Natural killer cell (primary cell): ENCODE measurements at regions of chr3 and their contacts with region 1.

Region 1: GRCh38 chr3:108124337-108125152 is 33.7 kb upstream of the CD47 start:
- DNase-seq: peak; percentile 32 to 89
- ATAC-seq: peak; percentile 63 to 78 (median 63)
- H3K4me3 ChIP-seq: peak overlapping the region; percentile 42
- H3K4me3 Mint-ChIP-seq: peak overlapping the region; percentile 79
- H3K27ac ChIP-seq: peak overlapping the region; percentile 97
- H3K27ac Mint-ChIP-seq: peak overlapping the region; percentile 93 to 97
- H3K4me1 ChIP-seq: peaks cover 60% of the 10 kb centered on the region
- H3K4me1 Mint-ChIP-seq: peaks cover 61 to 63% of the 10 kb centered on the region in 2 donors
- H3K27me3 ChIP-seq: no peaks in the 10 kb centered on the region
- H3K27me3 Mint-ChIP-seq: no peaks in the 10 kb centered on the region
- CTCF ChIP-seq: no peak

Region 2: GRCh38 chr3:108073764-108074431 is 50.6 kb before region 1 on chr3:
- intact Hi-C with region 1: loop called (anchors 10 kb)
- DNase-seq: no peak
- ATAC-seq: no peak
- H3K4me3 ChIP-seq: no peak overlapping the region
- H3K4me3 Mint-ChIP-seq: no peak overlapping the region
- H3K27ac ChIP-seq: no peak overlapping the region
- H3K27ac Mint-ChIP-seq: peak overlapping the region; percentile 76 to 79
- H3K4me1 ChIP-seq: peaks cover 7% of the 10 kb centered on the region
- H3K4me1 Mint-ChIP-seq: peaks cover 88 to 92% of the 10 kb centered on the region in 2 donors
- H3K27me3 ChIP-seq: no peaks in the 10 kb centered on the region
- H3K27me3 Mint-ChIP-seq: no peaks in the 10 kb centered on the region
- CTCF ChIP-seq: no peak

Region 3: GRCh38 chr3:108100906-108101660 is 23.5 kb before region 1 on chr3:
- intact Hi-C with region 1: loop called (anchors 1 kb)
- DNase-seq: peak in 1 of 2 donors; percentile 68
- ATAC-seq: peak; percentile 26 to 33 (median 28)
- H3K4me3 ChIP-seq: no peak overlapping the region
- H3K4me3 Mint-ChIP-seq: peak overlapping the region; percentile 75
- H3K27ac ChIP-seq: peak overlapping the region; percentile 69
- H3K27ac Mint-ChIP-seq: peak overlapping the region; percentile 88 to 97
- H3K4me1 ChIP-seq: peaks cover 72% of the 10 kb centered on the region
- H3K4me1 Mint-ChIP-seq: peaks cover 77 to 81% of the 10 kb centered on the region in 2 donors
- H3K27me3 ChIP-seq: no peaks in the 10 kb centered on the region
- H3K27me3 Mint-ChIP-seq: no peaks in the 10 kb centered on the region
- CTCF ChIP-seq: no peak

Region 4: GRCh38 chr3:108150200-108150599 is 25.7 kb after region 1 on chr3:
- intact Hi-C with region 1: no loop called
- DNase-seq: no peak
- ATAC-seq: no peak
- H3K4me3 ChIP-seq: no peak overlapping the region
- H3K4me3 Mint-ChIP-seq: no peak overlapping the region
- H3K27ac ChIP-seq: no peak overlapping the region
- H3K27ac Mint-ChIP-seq: no peak overlapping the region
- H3K4me1 ChIP-seq: no peaks in the 10 kb centered on the region
- H3K4me1 Mint-ChIP-seq: peaks cover 9 to 32% of the 10 kb centered on the region in 2 donors
- H3K27me3 ChIP-seq: no peaks in the 10 kb centered on the region
- H3K27me3 Mint-ChIP-seq: no peaks in the 10 kb centered on the region
- CTCF ChIP-seq: no peak

Region 5: DNA sequence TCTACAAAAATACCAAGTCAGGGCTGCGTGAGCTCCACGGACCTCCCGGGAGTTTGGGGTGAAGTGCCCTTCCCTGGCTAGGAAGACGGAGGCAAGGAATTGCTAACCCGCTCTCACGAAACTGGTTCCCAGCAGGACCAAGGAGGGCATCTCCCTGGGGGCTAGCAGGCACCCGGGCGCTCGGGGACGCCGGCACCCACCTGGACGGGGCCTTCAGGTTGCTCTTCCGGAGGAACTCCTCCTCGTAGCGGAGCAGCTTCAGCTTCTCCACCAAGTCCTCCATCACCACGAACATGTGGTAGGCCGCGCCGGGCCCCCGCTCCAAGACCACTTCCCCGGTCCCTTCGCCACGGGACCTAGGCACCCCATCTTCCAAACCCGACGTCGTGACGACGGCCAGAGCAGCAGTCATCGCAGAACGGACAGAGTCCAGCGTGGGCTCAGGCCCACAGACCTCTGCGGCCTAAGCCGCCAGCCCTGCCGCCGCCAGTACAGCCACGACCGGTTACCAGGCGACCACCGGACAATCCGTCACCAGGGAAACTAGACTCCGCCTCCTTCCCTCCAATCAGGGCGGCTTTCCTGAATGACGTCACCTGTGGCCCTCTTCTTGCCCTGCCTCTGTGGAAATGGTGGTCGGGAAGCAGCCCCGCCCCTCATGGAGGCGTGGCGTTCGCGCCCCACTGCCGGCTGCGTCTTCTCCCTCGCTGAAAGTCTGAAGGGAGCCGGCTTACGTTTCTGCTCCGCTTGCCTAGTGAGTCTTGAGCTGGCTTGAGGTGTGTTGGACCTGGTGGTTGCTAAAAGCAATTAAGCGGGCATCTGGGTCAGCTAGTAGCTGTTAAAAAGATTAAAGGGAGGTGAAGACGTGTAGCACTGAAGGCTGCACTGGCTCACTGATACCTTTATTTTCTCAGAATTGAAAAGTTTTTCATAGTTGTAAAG is 97.6 kb after region 1 on chr3 and contains the start of gene IFT57:
- intact Hi-C with region 1: loop called (anchors 2 kb)
- DNase-seq: peak; percentile 94 to 99
- ATAC-seq: peak; percentile 93 to 98 (median 95)
- H3K4me3 ChIP-seq: peak within 1 kb of the TSS; percentile 86
- H3K4me3 Mint-ChIP-seq: peak within 1 kb of the TSS; percentile 97
- H3K27ac ChIP-seq: peak within 1 kb of the TSS; percentile 91
- H3K27ac Mint-ChIP-seq: peak within 1 kb of the TSS; percentile 99 to 100
- H3K4me1 ChIP-seq: peaks cover 11% of the 10 kb centered on the region
- H3K4me1 Mint-ChIP-seq: peaks cover 39 to 50% of the 10 kb centered on the region in 2 donors
- H3K27me3 ChIP-seq: no peaks in the 10 kb centered on the region
- H3K27me3 Mint-ChIP-seq: no peaks in the 10 kb centered on the region
- CTCF ChIP-seq: no peak
- total RNA-seq, gene IFT57: 22.2 to 49.3 (median 33.5) TPM

Region 6: DNA sequence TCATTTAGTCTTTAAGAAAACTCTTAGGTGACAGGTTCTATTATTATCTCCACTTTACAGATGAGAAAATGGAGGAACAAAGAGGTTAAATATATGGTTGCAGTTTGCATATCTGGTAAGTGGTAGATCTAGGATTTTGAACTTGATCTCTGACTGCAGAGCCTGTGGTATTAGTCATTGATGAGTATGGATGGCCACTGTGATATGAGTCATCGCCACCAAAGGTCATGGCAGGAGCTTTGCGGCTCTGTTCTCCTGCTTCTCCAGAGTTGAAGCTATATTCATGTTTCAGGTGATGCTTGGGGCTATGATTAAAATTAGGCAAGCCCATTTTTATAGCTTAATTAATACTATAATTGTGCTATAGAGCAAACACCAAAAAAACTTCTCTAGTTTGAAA is 1519.0 kb after region 1 on chr3:
- intact Hi-C with region 1: no loop called
- DNase-seq: no peak
- ATAC-seq: no peak
- H3K4me3 ChIP-seq: no peak overlapping the region
- H3K4me3 Mint-ChIP-seq: no peak overlapping the region
- H3K27ac ChIP-seq: no peak overlapping the region
- H3K27ac Mint-ChIP-seq: no peak overlapping the region
- H3K4me1 ChIP-seq: no peaks in the 10 kb centered on the region
- H3K4me1 Mint-ChIP-seq: no peaks in the 10 kb centered on the region
- H3K27me3 ChIP-seq: no peaks in the 10 kb centered on the region
- H3K27me3 Mint-ChIP-seq: no peaks in the 10 kb centered on the region
- CTCF ChIP-seq: no peak